Heart left ventricle (tissue), 16 donors: ENCODE measurements at regions of chr4 and their contacts with region 1.

Region 1: DNA sequence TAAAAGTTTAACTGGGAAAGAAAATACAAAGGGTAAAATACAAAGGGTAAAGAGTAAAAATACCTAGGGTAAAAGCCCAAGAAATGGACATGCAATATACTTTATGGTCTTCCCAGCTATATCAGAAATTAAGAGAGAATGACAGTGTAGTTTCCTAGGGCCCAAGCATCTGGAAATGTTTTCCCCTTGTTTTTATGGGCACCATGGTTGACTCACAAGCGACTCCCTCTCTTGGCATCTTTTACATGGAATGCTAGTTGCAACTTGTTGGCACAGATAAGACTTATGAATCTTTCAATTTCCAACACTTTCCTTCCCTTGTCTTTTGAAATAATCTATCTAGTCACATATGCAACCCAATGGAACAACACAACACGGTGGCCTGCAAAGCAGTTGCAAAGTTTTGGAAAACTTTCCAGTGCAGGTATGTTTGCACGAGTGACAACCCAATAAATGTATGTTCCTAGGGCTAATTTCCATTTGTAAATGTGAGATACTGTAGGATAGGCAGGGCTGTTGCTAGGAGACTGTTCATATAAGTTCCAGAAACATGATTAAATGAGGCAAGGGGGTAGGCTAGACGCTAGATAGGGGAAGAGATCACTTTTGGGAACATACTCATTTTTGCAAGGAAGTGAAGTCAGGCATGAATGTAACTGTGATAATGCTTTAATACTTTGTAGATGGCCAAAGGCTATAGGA is 36.4 kb upstream of the CWH43 start:
- DNase-seq: no peak
- ATAC-seq: no peak
- H3K4me3 ChIP-seq: no peak overlapping the region
- H3K27ac ChIP-seq: no peak overlapping the region
- H3K4me1 ChIP-seq: no peaks in the 10 kb centered on the region
- H3K27me3 ChIP-seq: no peaks in the 10 kb centered on the region
- CTCF ChIP-seq: no peak
- POLR2A ChIP-seq: no peak

Region 2: DNA sequence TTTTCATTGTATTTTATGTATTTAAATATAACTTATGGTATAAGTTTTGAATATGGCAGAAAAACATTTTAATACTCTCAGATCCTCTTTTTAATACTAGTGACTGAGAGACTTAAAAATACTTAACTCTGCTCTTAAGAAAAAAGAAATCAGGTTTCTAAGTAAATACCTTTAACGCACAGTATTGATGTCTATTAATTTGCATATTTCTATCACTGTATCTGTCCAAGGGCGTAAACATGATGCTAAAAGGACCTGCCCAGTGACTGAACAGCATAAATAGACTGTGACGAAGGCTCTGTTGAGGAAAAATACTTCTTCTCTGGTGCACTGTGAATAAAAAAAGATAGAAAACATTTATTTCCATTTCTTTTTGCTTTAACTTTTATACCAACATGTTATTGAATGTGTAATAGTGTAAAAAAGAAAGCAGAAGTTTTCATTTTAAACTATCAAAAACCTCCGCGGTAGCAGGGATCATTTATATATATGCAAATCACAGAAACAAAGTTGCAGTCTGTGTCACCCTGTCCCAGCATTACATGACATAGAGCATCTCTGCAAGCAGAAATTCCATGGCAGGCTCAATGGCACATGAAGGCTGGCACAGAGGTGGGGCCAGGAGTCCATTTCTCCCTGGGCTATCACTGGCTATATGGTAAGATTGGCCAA is 384.2 kb before region 1 on chr4:
- intact Hi-C with region 1: no loop called
- DNase-seq: no peak
- ATAC-seq: no peak
- H3K4me3 ChIP-seq: no peak overlapping the region
- H3K27ac ChIP-seq: no peak overlapping the region
- H3K4me1 ChIP-seq: no peaks in the 10 kb centered on the region
- H3K27me3 ChIP-seq: no peaks in the 10 kb centered on the region
- CTCF ChIP-seq: no peak
- POLR2A ChIP-seq: no peak

Region 3: GRCh38 chr4:48602222-48602621 is 347.4 kb before region 1 on chr4:
- intact Hi-C with region 1: no loop called
- DNase-seq: no peak
- ATAC-seq: no peak
- H3K4me3 ChIP-seq: no peak overlapping the region
- H3K27ac ChIP-seq: no peak overlapping the region
- H3K4me1 ChIP-seq: peaks cover 0 to 17% (median 0%) of the 10 kb centered on the region in 12 donors
- H3K27me3 ChIP-seq: no peaks in the 10 kb centered on the region
- CTCF ChIP-seq: no peak
- POLR2A ChIP-seq: no peak

Region 4: GRCh38 chr4:48681856-48682255 is 267.8 kb before region 1 on chr4:
- intact Hi-C with region 1: loop called in 2 of 10 experiments (anchors 10 kb)
- DNase-seq: no peak
- ATAC-seq: peak in 2 of 4 donors; percentile 53 to 61
- H3K4me3 ChIP-seq: no peak overlapping the region
- H3K27ac ChIP-seq: peak overlapping the region in 2 of 12 donors; percentile 12 to 21
- H3K4me1 ChIP-seq: peaks cover 0 to 34% (median 13%) of the 10 kb centered on the region in 12 donors
- H3K27me3 ChIP-seq: no peaks in the 10 kb centered on the region
- CTCF ChIP-seq: peak in 10 of 12 donors; percentile 41 to 63 (median 55)
- POLR2A ChIP-seq: no peak

Region 5: GRCh38 chr4:48877827-48878533 is 71.7 kb before region 1 on chr4:
- intact Hi-C with region 1: no loop called
- DNase-seq: no peak
- ATAC-seq: no peak
- H3K4me3 ChIP-seq: no peak overlapping the region
- H3K27ac ChIP-seq: no peak overlapping the region
- H3K4me1 ChIP-seq: no peaks in the 10 kb centered on the region
- H3K27me3 ChIP-seq: no peaks in the 10 kb centered on the region
- CTCF ChIP-seq: no peak
- POLR2A ChIP-seq: no peak

Region 6: DNA sequence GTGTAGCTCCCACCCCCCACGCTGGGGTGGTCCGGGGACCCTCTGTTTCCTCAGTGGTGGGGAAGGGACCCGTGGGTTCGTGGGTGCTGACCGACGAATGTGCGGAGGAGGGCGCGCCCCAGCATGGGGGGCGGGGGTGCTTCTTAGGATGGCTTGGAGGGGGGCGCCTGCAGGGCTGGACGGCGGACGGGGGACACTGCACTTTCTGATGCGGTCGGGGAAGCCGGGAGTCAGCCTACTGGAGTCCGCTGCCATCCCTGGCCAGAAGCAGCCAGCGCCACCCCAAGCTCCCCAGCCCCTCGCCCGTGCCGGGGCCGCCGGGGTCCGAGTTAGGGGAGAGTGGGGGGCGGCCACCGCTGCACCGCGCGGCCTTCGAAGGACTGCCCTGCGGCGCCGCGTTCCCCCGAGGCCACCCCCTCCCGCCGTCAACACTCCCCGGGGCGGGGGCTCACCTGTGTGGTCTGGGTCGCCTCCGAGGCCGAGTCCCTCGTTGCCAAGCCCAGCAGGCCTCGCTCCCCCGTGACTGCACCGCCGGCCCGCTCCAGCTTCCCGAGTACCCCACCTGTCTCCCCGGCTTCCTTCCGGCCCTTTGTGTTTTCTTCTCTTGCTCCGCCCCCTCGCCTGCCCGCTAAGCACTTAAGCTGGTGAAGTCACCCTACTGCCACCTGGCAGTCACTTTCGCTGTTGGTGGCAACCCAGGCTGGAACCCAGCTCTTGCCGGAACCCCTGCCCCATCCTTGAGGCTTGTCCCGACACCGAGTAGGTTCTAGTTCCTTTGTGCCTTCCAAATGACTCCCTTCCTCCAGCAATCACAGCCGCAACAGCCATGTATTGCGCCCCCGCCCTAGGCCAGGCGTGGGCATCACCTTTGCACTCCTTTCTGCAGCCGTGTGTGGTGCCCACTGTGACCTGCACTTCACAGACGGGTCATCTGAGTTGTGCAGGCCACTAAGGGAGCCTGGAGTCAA is 43.2 kb before region 1 on chr4 and contains the start of gene OCIAD2:
- intact Hi-C with region 1: loop called in 1 of 10 experiments (anchors 10 kb)
- DNase-seq: peak; percentile 64 to 76 (median 71)
- ATAC-seq: peak; percentile 51 to 89 (median 80)
- H3K4me3 ChIP-seq: peak within 1 kb of the TSS; percentile 56 to 84 (median 70)
- H3K27ac ChIP-seq: peak within 1 kb of the TSS in 11 of 12 donors; percentile 24 to 78 (median 48)
- H3K4me1 ChIP-seq: peaks cover 0 to 18% (median 4%) of the 10 kb centered on the region in 12 donors
- H3K27me3 ChIP-seq: no peaks in the 10 kb centered on the region
- CTCF ChIP-seq: peak in 5 of 12 donors; percentile 10 to 42 (median 21)
- POLR2A ChIP-seq: no peak
- total RNA-seq, gene OCIAD2: 14.4 to 47.9 (median 22.7) TPM